ENCODE measurements at regions of chr5 and their contacts with region 1.

Region 1: GRCh38 chr5:172943283-172943841 is 15.9 kb upstream of the RPL26L1 start:
- DNase-seq: no peak
- H3K4me3 ChIP-seq: no peak overlapping the region
- H3K27ac ChIP-seq: peak overlapping the region in 3 of 4 donors; percentile 31 to 47 (median 41)
- H3K4me1 ChIP-seq: no peaks in the 10 kb centered on the region
- H3K27me3 ChIP-seq: no peaks in the 10 kb centered on the region
- CTCF ChIP-seq: no peak
- POLR2A ChIP-seq: no peak

Region 2: DNA sequence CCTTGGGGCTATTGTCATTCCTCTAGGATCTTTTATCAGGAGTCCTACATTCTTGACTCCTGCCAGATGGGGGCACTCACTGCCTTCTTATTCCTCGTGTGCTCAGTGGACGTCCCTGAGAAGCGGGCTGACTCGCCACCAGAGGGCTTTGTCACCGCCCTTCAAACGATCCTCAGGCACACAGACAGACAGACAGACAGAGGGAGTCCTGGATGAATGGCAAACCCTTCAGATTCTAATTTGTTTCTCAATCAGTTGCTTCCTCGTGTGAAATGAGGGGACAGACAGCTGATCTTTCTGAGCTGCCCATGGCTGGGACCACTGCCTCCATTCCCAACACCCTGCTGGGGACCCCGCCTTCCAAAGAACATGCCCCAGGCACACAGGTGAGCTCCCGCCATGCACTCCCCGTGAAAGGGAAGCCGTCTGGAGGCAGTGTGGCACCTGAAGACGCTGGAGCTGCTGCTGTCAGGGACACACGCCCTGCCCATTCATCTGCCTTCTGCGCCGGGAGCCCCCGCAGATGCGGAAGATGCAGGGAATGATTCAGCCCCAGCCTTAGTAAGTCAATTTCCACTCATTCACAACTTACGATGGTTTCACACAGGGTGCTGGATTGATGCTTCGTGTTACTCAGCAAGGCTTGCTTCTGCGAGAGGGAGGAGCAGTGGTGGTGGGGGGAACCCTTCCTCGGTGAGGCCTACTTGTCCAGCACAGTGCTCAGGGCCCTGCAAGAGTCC is 464.1 kb before region 1 on chr5:
- intact Hi-C with region 1: loop called (anchors 10 kb)
- DNase-seq: no peak
- H3K4me3 ChIP-seq: no peak overlapping the region
- H3K27ac ChIP-seq: peak overlapping the region in 3 of 4 donors; percentile 39 to 65 (median 65)
- H3K4me1 ChIP-seq: peaks cover 0 to 29% (median 6%) of the 10 kb centered on the region in 3 donors
- H3K27me3 ChIP-seq: no peaks in the 10 kb centered on the region
- CTCF ChIP-seq: peak; percentile 73 to 99 (median 96)
- POLR2A ChIP-seq: no peak

Region 3: GRCh38 chr5:173187054-173187789 is 243.9 kb after region 1 on chr5:
- intact Hi-C with region 1: no loop called
- DNase-seq: no peak
- H3K4me3 ChIP-seq: no peak overlapping the region
- H3K27ac ChIP-seq: no peak overlapping the region
- H3K4me1 ChIP-seq: no peaks in the 10 kb centered on the region
- H3K27me3 ChIP-seq: peaks cover 0 to 6% (median 0%) of the 10 kb centered on the region in 4 donors
- CTCF ChIP-seq: no peak
- POLR2A ChIP-seq: no peak

Measured in esophagus squamous epithelium (tissue), 5 donors.